GM10248 (cell line): ENCODE measurements at regions of chr7 and their contacts with region 1.

Region 1: DNA sequence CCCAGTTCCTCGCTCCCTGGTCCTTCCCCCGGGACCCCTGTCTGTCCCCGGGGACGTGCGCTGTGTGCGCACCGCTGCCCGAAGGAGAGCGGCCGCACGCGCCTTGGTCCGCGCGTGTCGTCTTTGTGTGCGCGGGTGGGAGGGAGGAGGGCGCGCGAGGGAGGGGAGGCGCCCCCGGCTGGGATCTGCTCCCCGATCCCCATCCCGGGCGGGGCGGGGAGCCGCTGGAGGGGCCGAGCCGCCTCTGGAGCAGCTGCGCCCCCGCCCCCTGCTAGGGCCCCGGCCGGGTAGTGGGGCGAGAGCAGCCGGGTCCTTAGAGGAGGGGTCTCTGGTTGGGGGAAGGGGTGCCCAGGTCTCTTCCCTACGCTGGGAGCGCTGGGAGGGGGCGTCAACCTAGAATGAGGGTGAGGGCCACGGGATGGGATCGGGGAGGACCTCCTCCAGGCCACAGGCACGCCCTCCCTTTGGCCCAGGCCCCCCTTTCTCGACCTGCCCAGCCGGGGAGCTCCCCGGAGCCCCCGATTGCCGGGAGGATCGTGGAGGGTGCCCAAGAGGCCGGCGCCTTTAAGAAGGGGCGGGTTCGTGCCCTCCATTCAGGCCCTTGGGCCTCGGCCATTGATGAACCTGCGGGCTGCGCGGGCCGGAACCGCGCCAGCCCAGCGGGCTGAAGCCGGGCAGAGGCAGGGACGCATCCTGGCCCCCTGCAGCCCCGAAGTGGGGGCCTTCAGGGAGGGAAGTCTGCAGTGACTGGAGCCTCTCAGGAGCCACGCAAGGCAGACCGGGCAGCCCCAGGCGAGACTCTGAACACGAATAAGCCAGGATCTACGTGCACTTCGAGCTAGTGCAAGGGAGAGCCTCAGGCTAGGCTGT is 678 bp downstream of the SH2B2 start:
- DNase-seq: no peak
- CTCF ChIP-seq: no peak

Region 2: GRCh38 chr7:102152672-102153585 is 134.4 kb before region 1 on chr7:
- CTCF ChIA-PET with region 1: no interaction called
- POLR2A ChIA-PET with region 1: no interaction called
- DNase-seq: no peak
- CTCF ChIP-seq: no peak

Region 3: GRCh38 chr7:102303669-102304422 is 16.5 kb after region 1 on chr7:
- CTCF ChIA-PET with region 1: interaction called, 13 read pairs
- POLR2A ChIA-PET with region 1: interaction called, 4 read pairs
- DNase-seq: no peak
- CTCF ChIP-seq: no peak

Region 4: DNA sequence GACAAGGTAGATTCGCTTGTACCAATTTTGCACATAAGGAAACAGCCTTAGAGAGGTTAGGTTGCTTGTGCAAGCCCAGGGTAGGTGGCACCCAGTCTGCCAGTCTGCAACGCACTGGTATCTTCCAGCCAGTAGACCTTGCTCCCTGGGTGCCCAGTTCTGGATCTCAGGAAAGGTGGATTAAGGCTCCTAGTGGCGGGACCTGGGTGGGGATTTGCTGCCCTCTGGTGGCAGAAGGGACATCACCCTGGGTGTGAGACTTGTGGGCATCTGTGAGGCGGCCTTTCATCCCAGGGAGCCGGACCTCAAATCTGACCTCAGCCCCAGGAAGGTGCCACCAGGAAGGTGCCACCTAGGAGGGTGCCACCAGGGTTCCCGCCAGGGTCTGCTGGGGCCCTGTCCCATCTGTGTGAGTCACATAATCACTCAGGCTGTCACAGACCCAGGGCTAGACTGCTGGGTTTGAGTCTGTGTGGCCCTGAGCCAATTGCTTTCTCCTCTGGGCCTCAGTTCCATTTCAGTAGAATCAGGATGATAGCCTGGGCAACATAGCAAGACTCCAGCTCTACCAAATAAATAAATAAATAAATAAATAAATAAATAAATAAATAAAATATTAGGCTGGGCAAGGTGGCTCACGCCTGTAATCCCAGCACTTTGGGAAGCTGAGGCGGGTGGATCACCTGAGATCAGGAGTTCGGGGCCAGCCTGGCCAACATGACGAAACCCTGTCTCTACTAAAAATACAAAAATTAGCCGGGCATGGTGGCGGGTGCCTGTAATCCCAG is 103.5 kb after region 1 on chr7:
- CTCF ChIA-PET with region 1: interaction called, 107 read pairs
- POLR2A ChIA-PET with region 1: no interaction called
- DNase-seq: peak; percentile 74
- CTCF ChIP-seq: peak; percentile 74